ENCODE measurements at regions of chr1 and their contacts with region 1.

Region 1: DNA sequence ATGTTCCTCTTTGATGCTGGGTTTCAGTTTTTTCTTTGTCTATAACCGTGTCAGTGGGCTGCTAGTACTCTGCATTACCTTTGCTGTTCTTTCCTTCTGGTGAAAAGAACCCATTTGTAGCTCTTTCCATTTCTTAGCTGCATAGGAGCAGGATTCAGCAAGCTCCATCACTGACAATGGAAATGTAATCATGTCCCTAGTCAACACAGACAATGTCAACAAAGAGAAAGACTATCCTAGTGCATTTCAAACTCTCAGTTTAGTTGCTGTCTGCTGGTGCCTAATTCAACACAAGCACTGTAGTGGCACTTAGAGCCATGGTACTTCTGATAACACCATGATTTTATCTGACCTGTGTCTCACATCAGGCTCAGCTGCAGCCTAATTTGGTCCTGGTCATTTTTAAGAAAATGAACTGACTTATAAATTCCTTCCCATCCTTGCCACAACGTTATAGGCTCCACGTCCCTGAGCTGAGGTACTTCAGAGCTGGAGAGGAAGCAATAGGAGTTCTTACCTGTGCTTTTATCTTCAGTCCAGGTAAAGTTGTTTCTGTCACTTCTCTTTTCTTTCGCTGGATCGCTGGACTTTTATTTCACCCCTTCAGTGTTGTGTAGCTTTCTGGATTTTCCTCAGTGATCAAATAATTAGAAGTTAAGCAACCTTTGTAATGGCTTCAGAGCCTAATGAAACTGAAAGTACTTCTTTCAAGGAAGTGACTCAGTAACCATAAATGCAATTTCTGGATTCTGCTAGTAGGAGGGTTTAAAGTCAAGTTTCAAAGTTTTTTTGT is at the start of gene GBP3:
- DNase-seq: no peak
- ATAC-seq: peak; percentile 84
- H3K4me3 Mint-ChIP-seq: peak within 1 kb of the TSS; percentile 74
- H3K27ac Mint-ChIP-seq: peak within 1 kb of the TSS; percentile 85
- H3K4me1 Mint-ChIP-seq: peaks cover 47% of the 10 kb centered on the region
- H3K27me3 Mint-ChIP-seq: no peaks in the 10 kb centered on the region
- CTCF ChIP-seq: no peak
- total RNA-seq, gene GBP3: 4.7 to 5.7 TPM

Region 2: GRCh38 chr1:89041119-89041641 is 18.8 kb after region 1 on chr1:
- CTCF ChIA-PET with region 1: interaction called, 14 read pairs
- POLR2A ChIA-PET with region 1: interaction called, 6 read pairs
- intact Hi-C with region 1: loop called (anchors 2 kb)
- DNase-seq: peak; percentile 43
- ATAC-seq: peak; percentile 88
- H3K4me3 Mint-ChIP-seq: peak overlapping the region; percentile 51
- H3K27ac Mint-ChIP-seq: peak overlapping the region; percentile 88
- H3K4me1 Mint-ChIP-seq: peaks cover 43% of the 10 kb centered on the region
- H3K27me3 Mint-ChIP-seq: peaks cover 2% of the 10 kb centered on the region
- CTCF ChIP-seq: no peak

Region 3: GRCh38 chr1:89203166-89203565 is 180.8 kb after region 1 on chr1:
- CTCF ChIA-PET with region 1: no interaction called
- POLR2A ChIA-PET with region 1: no interaction called
- intact Hi-C with region 1: no loop called
- DNase-seq: no peak
- ATAC-seq: peak; percentile 40
- H3K4me3 Mint-ChIP-seq: no peak overlapping the region
- H3K27ac Mint-ChIP-seq: no peak overlapping the region
- H3K4me1 Mint-ChIP-seq: peaks cover 42% of the 10 kb centered on the region
- H3K27me3 Mint-ChIP-seq: no peaks in the 10 kb centered on the region
- CTCF ChIP-seq: no peak